ENCODE measurements at regions of chr2 and their contacts with region 1.

Region 1: DNA sequence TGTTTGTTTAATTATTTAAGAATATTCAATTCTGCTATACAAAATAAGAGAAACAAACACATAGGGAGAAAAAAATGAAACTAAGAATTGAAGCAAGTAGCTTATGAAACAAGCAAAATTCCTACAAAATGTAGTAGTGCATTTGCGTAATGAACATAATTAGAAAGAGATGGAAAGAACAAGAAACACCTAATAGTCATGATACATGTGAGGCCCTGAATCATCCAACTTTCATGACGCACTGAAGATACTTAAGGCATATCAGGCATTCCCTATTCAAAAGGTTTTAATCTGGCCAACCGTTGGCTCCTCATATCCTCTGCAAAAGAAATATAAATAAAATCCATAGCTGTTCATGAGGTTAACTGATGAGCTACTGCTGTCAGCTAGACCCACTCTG is 14.5 kb upstream of the NAB1 start:
- DNase-seq: no peak
- H3K4me3 ChIP-seq: no peak overlapping the region
- H3K27ac ChIP-seq: no peak overlapping the region
- H3K4me1 ChIP-seq: peaks cover 25% of the 10 kb centered on the region
- H3K27me3 ChIP-seq: no peaks in the 10 kb centered on the region
- CTCF ChIP-seq: no peak

Region 2: DNA sequence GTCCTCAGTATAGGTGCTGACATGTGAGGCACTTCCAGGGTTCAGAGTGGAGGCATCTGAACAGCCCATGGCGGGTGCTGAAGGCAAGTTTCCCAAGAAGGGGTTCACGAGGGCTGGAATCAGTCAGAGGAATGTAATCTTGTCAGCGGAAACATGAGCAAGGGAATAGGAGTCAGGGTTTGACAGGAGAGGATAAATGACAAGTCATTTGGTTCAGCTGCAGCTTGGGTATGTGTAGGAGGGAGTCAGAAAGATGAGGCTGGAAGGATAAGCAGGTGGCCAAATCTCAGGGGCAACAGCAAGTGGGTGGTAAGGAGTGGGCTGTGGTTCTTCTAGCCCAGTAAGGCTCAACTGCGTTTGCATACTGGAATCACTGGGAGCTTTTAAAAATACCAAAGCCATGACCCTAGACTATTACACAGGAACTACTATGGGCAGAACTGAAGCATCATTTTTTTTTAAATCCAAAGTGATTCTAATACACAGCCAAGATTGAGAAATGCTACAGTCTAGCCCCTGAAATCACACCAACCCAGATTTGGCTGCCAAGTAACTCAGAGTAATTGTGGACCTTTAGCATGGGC is 27.3 kb before region 1 on chr2:
- CTCF ChIA-PET with region 1: no interaction called
- POLR2A ChIA-PET with region 1: interaction called, 17 read pairs
- intact Hi-C with region 1: no loop called
- DNase-seq: peak in 1 of 2 experiments; percentile 4
- H3K4me3 ChIP-seq: peak overlapping the region; percentile 39; the same call in 1 of the 2 replicates
- H3K27ac ChIP-seq: peak overlapping the region; percentile 62
- H3K4me1 ChIP-seq: peaks cover 19% of the 10 kb centered on the region
- H3K27me3 ChIP-seq: no peaks in the 10 kb centered on the region
- CTCF ChIP-seq: no peak

Region 3: GRCh38 chr2:191885098-191885497 is 1250.7 kb after region 1 on chr2:
- CTCF ChIA-PET with region 1: no interaction called
- POLR2A ChIA-PET with region 1: no interaction called
- intact Hi-C with region 1: no loop called
- DNase-seq: no peak
- H3K4me3 ChIP-seq: no peak overlapping the region
- H3K27ac ChIP-seq: no peak overlapping the region
- H3K4me1 ChIP-seq: no peaks in the 10 kb centered on the region
- H3K27me3 ChIP-seq: no peaks in the 10 kb centered on the region
- CTCF ChIP-seq: no peak

Measured in PC-9 (cell line).